Right cardiac atrium (tissue), 5 donors: ENCODE measurements at regions of chr19 and their contacts with region 1.

Region 1: DNA sequence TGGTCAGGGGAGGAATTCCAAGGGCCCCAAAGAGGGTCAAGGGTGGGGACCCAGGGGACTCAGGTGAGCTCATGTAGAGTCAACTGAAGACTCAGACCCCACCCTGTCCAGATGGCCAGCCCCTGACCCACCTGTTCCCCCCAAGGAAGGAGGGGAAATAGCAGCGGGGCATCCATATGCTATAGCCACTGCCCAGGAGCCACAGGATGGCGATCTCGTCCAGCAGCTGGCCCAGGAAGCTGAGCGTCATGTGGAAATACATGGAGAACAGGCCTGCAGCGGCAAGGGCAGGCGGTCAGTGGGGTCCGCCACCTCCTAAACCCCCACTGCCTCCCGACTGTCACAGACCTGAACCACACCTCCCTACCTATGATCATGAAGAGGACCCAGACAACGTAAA is 21.4 kb downstream of the ACER1 start:
- DNase-seq: no peak
- ATAC-seq: no peak
- H3K4me3 ChIP-seq: no peak overlapping the region
- H3K27ac ChIP-seq: no peak overlapping the region
- H3K4me1 ChIP-seq: no peaks in the 10 kb centered on the region
- H3K27me3 ChIP-seq: no peaks in the 10 kb centered on the region

Region 2: DNA sequence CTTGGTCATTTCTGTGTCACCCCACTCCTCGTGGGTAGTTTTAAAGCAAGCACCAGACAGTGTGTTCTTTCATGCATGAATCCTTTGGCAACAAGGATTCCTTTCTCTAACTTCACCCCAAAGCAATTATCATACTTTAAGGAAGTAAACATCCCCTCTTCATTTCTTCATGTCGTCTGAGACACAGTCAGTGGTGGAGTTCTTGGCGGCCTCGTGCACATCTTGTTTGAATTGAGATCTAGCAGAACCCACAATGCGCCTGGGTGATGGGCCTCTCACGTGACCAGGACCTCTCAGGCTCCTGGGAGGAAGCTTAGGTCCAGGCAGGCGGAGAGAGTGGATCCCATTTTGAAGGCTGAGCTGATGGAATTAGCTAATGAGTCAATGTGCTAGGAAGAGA is 174.0 kb before region 1 on chr19:
- intact Hi-C with region 1: no loop called
- DNase-seq: no peak
- ATAC-seq: no peak
- H3K4me3 ChIP-seq: no peak overlapping the region
- H3K27ac ChIP-seq: no peak overlapping the region
- H3K4me1 ChIP-seq: no peaks in the 10 kb centered on the region
- H3K27me3 ChIP-seq: no peaks in the 10 kb centered on the region

Region 3: GRCh38 chr19:6161271-6161850 is 150.7 kb before region 1 on chr19:
- intact Hi-C with region 1: loop called in 1 of 4 experiments (anchors 10 kb)
- DNase-seq: peak; percentile 50 to 65 (median 56)
- ATAC-seq: peak; percentile 41 to 93
- H3K4me3 ChIP-seq: no peak overlapping the region
- H3K27ac ChIP-seq: no peak overlapping the region
- H3K4me1 ChIP-seq: no peaks in the 10 kb centered on the region
- H3K27me3 ChIP-seq: no peaks in the 10 kb centered on the region